Colonic mucosa (tissue), 4 donors: ENCODE measurements at regions of chr6 and their contacts with region 1.

Region 1: GRCh38 chr6:159008656-159009288 is 8.8 kb upstream of the RSPH3 start:
- DNase-seq: no peak
- H3K4me3 ChIP-seq: no peak overlapping the region
- H3K27ac ChIP-seq: no peak overlapping the region
- H3K4me1 ChIP-seq: no peaks in the 10 kb centered on the region
- H3K27me3 ChIP-seq: no peaks in the 10 kb centered on the region
- CTCF ChIP-seq: peak; percentile 36

Region 2: DNA sequence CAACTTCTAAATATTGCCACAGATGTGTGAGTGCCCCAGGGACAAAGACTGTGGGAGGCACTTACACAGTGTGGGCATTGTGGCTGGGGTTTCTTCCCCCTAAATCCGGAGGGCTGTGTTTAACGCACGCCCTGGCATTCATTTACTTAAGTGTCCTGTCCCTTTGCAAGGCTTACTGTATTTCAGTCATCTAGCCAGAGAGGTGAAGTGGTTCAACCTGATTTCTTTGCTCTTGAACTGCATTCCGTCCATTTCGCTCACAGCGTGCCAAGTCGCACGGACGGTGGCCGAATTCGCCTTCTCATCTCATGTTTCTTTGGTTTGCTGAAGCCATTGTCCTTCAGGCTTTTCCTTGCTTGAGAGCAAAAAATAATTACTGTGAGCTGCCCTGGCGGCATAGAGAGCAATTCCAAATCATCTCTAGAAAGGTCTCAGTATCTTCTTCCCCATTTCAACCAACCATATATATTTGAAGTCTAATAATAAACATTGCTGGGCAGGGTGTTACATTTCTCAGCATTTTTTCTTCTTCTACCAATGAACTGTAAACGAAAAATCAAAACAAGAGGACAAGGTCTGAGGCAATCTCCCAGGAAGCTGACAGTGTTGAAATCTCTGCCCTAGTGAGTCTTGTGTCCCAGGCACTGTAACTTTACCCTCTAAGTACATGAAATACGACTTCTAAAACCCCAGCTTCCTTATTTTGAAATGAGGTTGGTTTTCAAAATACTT is 342.0 kb before region 1 on chr6:
- intact Hi-C with region 1: no loop called
- DNase-seq: peak; percentile 14
- H3K4me3 ChIP-seq: no peak overlapping the region
- H3K27ac ChIP-seq: peak overlapping the region; percentile 23
- H3K4me1 ChIP-seq: no peaks in the 10 kb centered on the region
- H3K27me3 ChIP-seq: no peaks in the 10 kb centered on the region
- CTCF ChIP-seq: no peak

Region 3: DNA sequence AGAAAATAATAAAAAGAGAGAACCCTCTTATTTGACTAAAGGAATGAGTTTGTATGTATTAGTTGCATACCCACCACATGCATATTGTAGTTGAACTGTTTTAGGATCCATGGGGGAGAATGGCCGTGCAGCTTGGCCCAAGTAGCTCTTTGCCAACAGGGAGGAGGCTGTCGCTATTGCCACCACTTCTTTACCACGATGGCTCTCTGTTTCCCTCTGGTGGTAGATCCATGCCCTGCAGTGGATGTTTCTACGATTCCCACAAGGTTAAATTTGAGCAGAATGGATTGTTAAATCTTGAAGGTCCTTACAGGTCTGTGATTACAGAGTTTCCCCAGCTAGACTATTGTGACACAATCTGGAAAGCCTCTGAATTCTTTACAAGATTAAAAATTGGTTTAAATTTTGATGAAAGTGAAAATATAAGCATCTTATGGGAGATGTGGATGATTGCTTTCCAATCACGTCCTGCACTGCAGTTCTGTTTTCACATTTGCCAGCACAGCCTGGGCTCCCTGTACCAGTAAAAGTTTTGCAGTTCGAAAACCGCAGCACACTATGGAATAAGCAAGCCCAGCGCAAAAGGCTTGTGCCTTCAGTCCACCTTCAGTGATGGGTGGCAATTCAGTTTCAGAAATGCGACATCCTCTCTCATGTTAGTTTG is 126.1 kb after region 1 on chr6:
- intact Hi-C with region 1: loop called (anchors 2 kb)
- DNase-seq: peak; percentile 75
- H3K4me3 ChIP-seq: no peak overlapping the region
- H3K27ac ChIP-seq: no peak overlapping the region
- H3K4me1 ChIP-seq: no peaks in the 10 kb centered on the region
- H3K27me3 ChIP-seq: no peaks in the 10 kb centered on the region
- CTCF ChIP-seq: peak; percentile 96